Heart left ventricle (tissue), 16 donors: ENCODE measurements at regions of chr3 and their contacts with region 1.

Region 1: DNA sequence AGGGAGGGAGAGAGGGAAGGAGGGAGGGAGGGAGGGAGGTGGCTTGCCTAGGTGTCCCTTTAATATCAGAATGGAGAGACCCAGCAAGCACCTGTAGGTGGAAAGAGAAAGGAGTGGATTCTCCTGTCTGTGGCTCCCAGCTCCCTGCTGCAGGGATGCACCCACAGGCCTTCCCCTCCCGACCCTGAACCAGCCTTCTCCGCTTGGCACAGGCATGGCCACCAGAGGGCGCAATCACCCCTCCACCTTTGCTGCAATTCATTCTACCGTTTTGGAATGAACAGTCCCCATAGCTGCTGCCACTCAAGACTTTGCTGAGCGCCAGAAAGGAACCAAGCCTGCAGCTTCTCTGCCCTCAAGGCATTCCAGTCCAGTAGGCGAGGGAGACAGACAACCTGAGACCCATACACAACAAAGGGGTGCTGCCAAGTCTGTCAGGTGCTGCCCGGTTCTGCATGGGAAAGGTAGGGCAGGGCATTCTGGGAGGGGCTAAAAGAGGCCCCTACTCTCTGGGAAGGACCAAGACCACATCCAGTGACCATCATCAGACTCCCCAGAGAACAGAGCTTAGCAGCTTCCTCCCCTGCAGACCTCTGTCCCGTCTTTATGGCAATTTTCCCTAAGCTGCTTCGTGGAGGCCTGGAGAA is 4.9 kb downstream of the TLR9 start:
- DNase-seq: peak; percentile 78 to 92 (median 86)
- ATAC-seq: peak in 3 of 4 donors; percentile 60 to 68 (median 63)
- H3K4me3 ChIP-seq: no peak overlapping the region
- H3K27ac ChIP-seq: no peak overlapping the region
- H3K4me1 ChIP-seq: peaks cover 5 to 64% (median 40%) of the 10 kb centered on the region in 12 donors
- H3K27me3 ChIP-seq: no peaks in the 10 kb centered on the region
- CTCF ChIP-seq: peak; percentile 85 to 93 (median 90)
- POLR2A ChIP-seq: no peak

Region 2: GRCh38 chr3:52001443-52001974 is 219.0 kb before region 1 on chr3:
- intact Hi-C with region 1: loop called in 1 of 10 experiments (anchors 5 kb)
- DNase-seq: peak; percentile 69 to 88 (median 74)
- ATAC-seq: peak; percentile 35 to 67 (median 63)
- H3K4me3 ChIP-seq: no peak overlapping the region
- H3K27ac ChIP-seq: no peak overlapping the region
- H3K4me1 ChIP-seq: peaks cover 13 to 34% (median 31%) of the 10 kb centered on the region in 12 donors
- H3K27me3 ChIP-seq: no peaks in the 10 kb centered on the region
- CTCF ChIP-seq: peak; percentile 76 to 96 (median 90)
- POLR2A ChIP-seq: no peak

Region 3: GRCh38 chr3:52154117-52155094 is 66.1 kb before region 1 on chr3 and contains the start of gene POC1A:
- intact Hi-C with region 1: loop called in 2 of 10 experiments (anchors 5 kb)
- DNase-seq: peak; percentile 95 to 99 (median 96)
- ATAC-seq: peak; percentile 98 to 99 (median 98)
- H3K4me3 ChIP-seq: peak within 1 kb of the TSS; percentile 38 to 73 (median 66)
- H3K27ac ChIP-seq: peak within 1 kb of the TSS; percentile 9 to 95 (median 88)
- H3K4me1 ChIP-seq: peaks cover 4 to 18% (median 13%) of the 10 kb centered on the region in 12 donors
- H3K27me3 ChIP-seq: no peaks in the 10 kb centered on the region
- CTCF ChIP-seq: peak in 6 of 12 donors; percentile 8 to 34 (median 19)
- POLR2A ChIP-seq: peak in 1 of 2 donors; percentile 64
- total RNA-seq, gene POC1A: 0.66 to 5.2 (median 1.4) TPM

Region 4: GRCh38 chr3:52182196-52182595 is 38.3 kb before region 1 on chr3:
- intact Hi-C with region 1: loop called in 2 of 10 experiments (anchors 1 kb)
- DNase-seq: no peak
- ATAC-seq: peak; percentile 41 to 55 (median 48)
- H3K4me3 ChIP-seq: no peak overlapping the region
- H3K27ac ChIP-seq: peak overlapping the region in 6 of 12 donors; percentile 22 to 80 (median 72)
- H3K4me1 ChIP-seq: peaks cover 3 to 38% (median 21%) of the 10 kb centered on the region in 12 donors
- H3K27me3 ChIP-seq: no peaks in the 10 kb centered on the region
- CTCF ChIP-seq: no peak
- POLR2A ChIP-seq: no peak

Region 5: GRCh38 chr3:52197842-52198668 is 22.4 kb before region 1 on chr3 and contains the start of gene ALAS1:
- intact Hi-C with region 1: loop called in 1 of 10 experiments (anchors 1 kb)
- DNase-seq: peak; percentile 93 to 96 (median 93)
- ATAC-seq: peak; percentile 84 to 93 (median 86)
- H3K4me3 ChIP-seq: peak within 1 kb of the TSS; percentile 46 to 99 (median 84)
- H3K27ac ChIP-seq: peak within 1 kb of the TSS; percentile 53 to 96 (median 90)
- H3K4me1 ChIP-seq: peaks cover 8 to 74% (median 63%) of the 10 kb centered on the region in 12 donors
- H3K27me3 ChIP-seq: no peaks in the 10 kb centered on the region
- CTCF ChIP-seq: peak in 5 of 12 donors; percentile 7 to 31 (median 20)
- POLR2A ChIP-seq: peak; percentile 55 to 98
- total RNA-seq, gene ALAS1: 77.9 to 213 (median 146) TPM

Region 6: DNA sequence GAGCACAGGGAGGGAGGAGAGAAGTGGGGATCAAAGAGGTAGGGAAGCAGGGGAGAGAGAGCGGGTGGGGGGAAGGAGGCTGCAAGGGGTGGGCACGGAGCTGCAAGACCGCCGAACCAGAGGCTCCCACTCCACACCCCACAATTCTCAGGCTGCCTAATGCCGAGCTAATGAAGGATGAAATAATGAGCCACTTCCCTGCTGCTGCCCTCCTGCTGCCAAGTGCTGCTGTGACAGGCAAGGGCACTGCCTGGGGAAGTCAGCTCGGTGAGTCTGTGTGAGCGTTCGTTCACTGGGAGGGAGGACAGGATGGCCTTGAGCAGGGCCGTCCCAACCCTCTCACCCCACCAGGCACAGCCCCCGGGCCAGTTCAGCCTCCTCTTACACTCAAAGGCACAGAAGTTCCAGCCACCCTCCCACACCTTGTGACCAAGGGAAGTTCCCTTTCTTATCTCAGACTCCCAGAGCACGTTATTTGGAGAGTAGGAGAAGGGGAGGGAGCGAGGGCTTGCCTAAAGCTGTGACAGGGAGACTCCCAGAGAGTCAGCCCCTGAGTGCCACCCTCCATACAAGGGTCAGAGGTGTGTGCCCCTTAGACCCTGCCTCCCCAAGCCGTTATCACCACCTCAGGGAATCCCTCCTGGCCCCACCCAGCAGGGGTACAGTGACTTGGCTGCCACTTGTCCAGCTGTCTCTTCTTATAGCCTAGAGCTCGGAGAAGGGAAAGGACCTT is 79.5 kb after region 1 on chr3:
- intact Hi-C with region 1: no loop called
- DNase-seq: peak; percentile 56 to 81 (median 70)
- ATAC-seq: peak; percentile 82 to 94 (median 88)
- H3K4me3 ChIP-seq: peak overlapping the region in 1 of 12 donors; percentile 10
- H3K27ac ChIP-seq: peak overlapping the region in 11 of 12 donors; percentile 9 to 74 (median 54)
- H3K4me1 ChIP-seq: peaks cover 0 to 28% (median 14%) of the 10 kb centered on the region in 12 donors
- H3K27me3 ChIP-seq: no peaks in the 10 kb centered on the region
- CTCF ChIP-seq: peak in 6 of 12 donors; percentile 22 to 50 (median 32)
- POLR2A ChIP-seq: no peak

Region 7: DNA sequence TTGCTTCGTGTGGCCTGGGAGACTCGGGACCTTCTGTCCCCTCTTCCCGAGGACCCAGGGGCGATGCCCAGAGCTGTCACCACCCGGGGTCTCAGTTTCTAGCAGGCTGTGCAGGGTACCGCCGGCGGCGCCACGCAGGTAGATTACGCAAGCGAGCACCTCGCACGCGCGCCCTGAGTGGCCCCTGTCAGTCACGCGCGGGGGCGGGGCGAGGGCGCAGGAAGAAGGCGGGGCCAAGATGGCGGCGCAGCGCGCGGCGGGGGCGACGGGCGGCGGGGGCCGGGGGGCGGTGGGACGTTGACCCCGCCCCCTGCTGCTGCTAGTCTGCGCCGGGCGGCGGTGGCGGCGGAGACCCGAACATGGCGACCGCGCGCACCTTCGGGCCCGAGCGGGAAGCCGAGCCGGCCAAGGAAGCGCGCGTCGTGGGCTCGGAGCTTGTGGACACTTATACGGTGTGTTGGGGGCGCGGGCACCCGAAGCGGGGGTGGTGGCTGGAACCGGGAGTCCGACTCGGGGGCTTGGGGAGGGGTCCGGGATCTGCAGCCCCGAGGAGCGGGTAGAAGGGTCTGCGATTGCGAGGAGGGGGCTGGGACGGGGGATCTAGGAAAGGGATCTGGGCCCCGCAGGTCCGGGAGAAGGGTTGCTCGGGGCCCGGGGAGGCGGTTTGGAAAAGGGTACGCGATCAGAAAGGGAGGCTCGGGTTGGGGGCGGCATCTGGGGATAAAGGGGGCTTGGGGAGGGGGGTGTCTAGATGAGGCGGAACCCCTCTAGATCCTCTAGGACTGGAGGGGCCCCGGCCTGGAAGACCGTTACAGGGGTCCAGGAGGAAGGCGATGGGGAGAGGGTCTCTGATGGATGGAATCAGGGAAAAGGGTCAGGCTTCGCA is 235.0 kb after region 1 on chr3 and contains the start of gene NISCH:
- intact Hi-C with region 1: no loop called
- DNase-seq: peak; percentile 92 to 96 (median 94)
- ATAC-seq: peak; percentile 13 to 59 (median 36)
- H3K4me3 ChIP-seq: peak within 1 kb of the TSS; percentile 57 to 92 (median 81)
- H3K27ac ChIP-seq: peak within 1 kb of the TSS; percentile 85 to 99 (median 94)
- H3K4me1 ChIP-seq: peaks cover 0 to 39% (median 23%) of the 10 kb centered on the region in 12 donors
- H3K27me3 ChIP-seq: no peaks in the 10 kb centered on the region
- CTCF ChIP-seq: peak in 1 of 12 donors; percentile 6
- POLR2A ChIP-seq: peak in 1 of 2 donors; percentile 66
- total RNA-seq, gene NISCH: 29.5 to 56.2 (median 43.9) TPM